ENCODE measurements at regions of chr11 and their contacts with region 1.

Region 1: DNA sequence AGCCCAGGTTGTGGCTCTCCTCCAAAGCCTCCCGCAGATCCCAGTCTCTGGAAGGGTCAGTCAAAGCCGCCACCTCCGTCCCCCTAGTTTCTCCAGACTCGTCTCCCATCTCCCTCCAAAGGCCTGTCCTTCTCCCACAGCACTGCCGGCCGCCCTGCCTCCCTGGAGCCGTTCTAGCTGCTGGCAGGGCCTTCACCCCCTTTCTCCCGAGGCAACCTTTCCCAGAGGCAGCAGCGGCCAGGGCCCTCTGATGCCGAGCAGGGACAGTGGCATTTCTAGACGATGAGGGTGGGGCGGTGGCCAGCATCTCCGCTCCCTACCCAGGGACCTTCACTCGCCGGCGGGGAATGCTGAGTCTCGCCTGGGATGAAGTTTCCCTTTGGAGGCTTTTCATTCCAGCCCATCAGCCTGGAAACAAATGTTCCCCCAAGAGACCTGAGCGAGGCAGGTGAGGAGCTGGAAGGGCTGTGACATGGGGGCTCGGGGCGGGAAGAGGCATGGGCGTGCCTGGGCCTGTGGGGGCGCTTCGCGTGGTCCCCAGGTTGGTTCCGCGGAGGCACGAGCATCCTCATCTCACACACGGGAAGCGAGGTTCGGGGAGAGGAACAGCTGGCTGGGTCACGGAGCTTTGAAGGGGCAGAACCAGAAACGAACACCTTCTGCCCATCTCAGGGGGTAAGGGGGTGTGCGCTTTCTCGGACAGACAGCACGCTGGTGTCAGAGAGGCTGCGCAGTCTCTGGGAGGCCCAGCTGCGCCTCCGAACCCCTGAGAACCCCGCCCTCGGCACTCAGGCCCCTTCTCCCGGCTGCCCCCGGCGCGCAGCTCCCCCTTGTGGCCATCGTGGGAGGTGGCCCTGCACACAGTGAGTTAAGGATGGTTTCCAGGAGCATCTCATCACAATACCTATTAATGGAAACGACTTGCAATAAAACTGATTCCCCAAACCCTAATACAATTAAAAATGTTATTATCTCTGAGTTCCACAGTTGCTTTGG is 18.1 kb upstream of the KLHL35 start:
- DNase-seq: peak in 1 of 2 experiments; percentile 97
- H3K4me3 ChIP-seq: peak overlapping the region in 3 of 4 experiments; percentile 3 to 27 (median 5); a peak in 2 of 8 replicates
- H3K27ac ChIP-seq: no peak overlapping the region
- H3K4me1 ChIP-seq: peaks cover 0 to 6% (median 0%) of the 10 kb centered on the region in 4 experiments; a peak in 3 of 7 replicates
- H3K27me3 ChIP-seq: no peaks in the 10 kb centered on the region; a peak in 1 of 7 replicates
- CTCF ChIP-seq: peak; percentile 87 to 93 (median 93)
- EP300 ChIP-seq: no peak
- POLR2A ChIP-seq: no peak
- RAD21 ChIP-seq: peak; percentile 66 to 80

Region 2: GRCh38 chr11:75437966-75438659 is 13.0 kb before region 1 on chr11:
- CTCF ChIA-PET with region 1: interaction called, 133 read pairs
- POLR2A ChIA-PET with region 1: interaction called, 12 read pairs
- DNase-seq: no peak
- H3K4me3 ChIP-seq: no peak overlapping the region
- H3K27ac ChIP-seq: no peak overlapping the region
- H3K4me1 ChIP-seq: peaks cover 0 to 21% (median 6%) of the 10 kb centered on the region in 4 experiments; a peak in 5 of 7 replicates
- H3K27me3 ChIP-seq: peaks cover 0 to 9% (median 4%) of the 10 kb centered on the region in 4 experiments; a peak in 4 of 7 replicates
- CTCF ChIP-seq: no peak
- EP300 ChIP-seq: no peak
- POLR2A ChIP-seq: no peak
- RAD21 ChIP-seq: no peak

Region 3: DNA sequence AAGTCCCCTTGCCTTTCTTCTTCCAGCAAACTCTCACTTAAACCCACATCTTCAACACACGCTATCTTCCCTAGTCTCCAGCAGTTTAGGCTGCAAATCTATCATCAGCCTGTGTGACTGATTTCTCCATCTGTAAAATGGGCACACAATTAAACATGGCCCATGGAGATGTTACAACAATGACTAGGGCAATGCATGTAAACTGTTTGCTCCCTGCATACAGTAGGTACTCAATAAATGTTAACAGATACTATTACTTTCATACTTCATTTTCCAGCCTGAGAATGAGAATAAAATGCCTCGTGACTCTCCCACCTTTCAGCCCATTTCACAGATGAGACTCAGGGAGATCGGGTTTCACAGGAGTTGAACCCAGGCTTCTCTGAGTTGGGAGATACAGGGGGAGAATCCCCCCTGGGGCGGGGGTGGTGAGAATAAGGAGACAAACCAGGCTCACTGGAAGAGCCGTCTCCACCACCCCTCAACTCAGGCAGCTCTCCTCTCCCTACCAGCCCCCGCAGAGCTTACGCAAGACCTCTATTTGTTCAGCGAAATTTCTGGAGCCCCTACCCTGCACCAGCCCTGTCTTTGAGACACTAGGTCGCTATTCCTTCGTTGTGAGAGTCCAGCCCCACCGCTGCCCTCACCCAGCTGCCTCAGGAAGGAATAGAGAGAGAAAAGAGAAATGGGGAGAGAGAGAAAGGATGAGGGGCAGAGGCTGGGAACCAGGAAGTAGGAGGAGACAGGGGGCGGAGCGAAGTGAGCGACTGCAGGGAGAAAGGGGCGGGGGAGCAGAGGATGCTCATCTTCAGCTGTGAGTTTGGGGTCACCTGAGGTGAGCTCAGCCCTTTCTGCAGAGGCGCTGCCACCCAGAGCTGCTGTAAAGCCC is 24.0 kb after region 1 on chr11:
- CTCF ChIA-PET with region 1: interaction called, 155 read pairs
- POLR2A ChIA-PET with region 1: interaction called, 3 read pairs
- DNase-seq: peak; percentile 38 to 86
- H3K4me3 ChIP-seq: peak overlapping the region in 2 of 4 experiments; percentile 17 to 55; a peak in 5 of 8 replicates
- H3K27ac ChIP-seq: no peak overlapping the region; the same call in 1 of the 2 replicates
- H3K4me1 ChIP-seq: peaks cover 3 to 8% (median 4%) of the 10 kb centered on the region in 4 experiments; a peak in 5 of 7 replicates
- H3K27me3 ChIP-seq: no peaks in the 10 kb centered on the region
- CTCF ChIP-seq: no peak
- EP300 ChIP-seq: no peak
- POLR2A ChIP-seq: peak in 1 of 2 experiments; percentile 47; a peak in 1 of 3 replicates
- RAD21 ChIP-seq: no peak

Region 4: DNA sequence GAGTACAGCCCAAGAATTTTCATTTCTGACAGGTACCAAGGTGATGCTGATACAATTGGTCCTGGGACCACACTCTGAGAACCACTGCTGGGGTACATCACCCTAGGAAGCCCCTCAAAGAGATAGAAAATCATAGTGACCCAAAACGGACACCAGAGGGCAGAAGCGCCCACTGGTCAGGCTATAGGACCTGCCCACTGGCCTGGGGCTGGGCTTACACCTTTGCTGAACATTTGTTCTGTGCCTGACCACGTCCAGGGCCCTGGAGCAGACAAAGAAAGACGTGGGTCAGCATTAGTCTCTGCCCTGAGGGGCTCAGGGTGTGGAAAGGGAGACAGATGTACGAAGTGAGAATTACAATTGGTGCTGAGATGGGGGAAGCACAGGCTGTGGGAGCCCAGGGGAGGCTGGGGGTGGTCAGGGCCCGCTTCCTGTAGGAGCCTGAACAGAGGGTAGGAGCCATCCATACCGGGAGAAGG is 96.5 kb after region 1 on chr11:
- CTCF ChIA-PET with region 1: interaction called, 14 read pairs
- POLR2A ChIA-PET with region 1: no interaction called
- DNase-seq: peak in 1 of 2 experiments; percentile 91
- H3K4me3 ChIP-seq: no peak overlapping the region
- H3K27ac ChIP-seq: no peak overlapping the region
- H3K4me1 ChIP-seq: peaks cover 0 to 4% (median 2%) of the 10 kb centered on the region in 4 experiments; a peak in 5 of 7 replicates
- H3K27me3 ChIP-seq: no peaks in the 10 kb centered on the region; a peak in 1 of 7 replicates
- CTCF ChIP-seq: peak; percentile 72 to 89 (median 82)
- EP300 ChIP-seq: no peak
- POLR2A ChIP-seq: peak in 1 of 2 experiments; percentile 19; a peak in 1 of 3 replicates
- RAD21 ChIP-seq: peak; percentile 89 to 92

Measured in H1 (cell line).